ENCODE measurements at regions of chr19 and their contacts with region 1.

Region 1: GRCh38 chr19:35509861-35510625 is 3.4 kb downstream of the DMKN start:
- DNase-seq: no peak
- H3K4me3 ChIP-seq: peak overlapping the region; percentile 46
- CTCF ChIP-seq: peak; percentile 93

Region 2: GRCh38 chr19:35360880-35361420 is 149.1 kb before region 1 on chr19:
- CTCF ChIA-PET with region 1: no interaction called
- POLR2A ChIA-PET with region 1: no interaction called
- DNase-seq: no peak
- H3K4me3 ChIP-seq: no peak overlapping the region
- CTCF ChIP-seq: no peak

Region 3: GRCh38 chr19:35449053-35449687 is 60.9 kb before region 1 on chr19:
- CTCF ChIA-PET with region 1: no interaction called
- POLR2A ChIA-PET with region 1: no interaction called
- DNase-seq: no peak
- H3K4me3 ChIP-seq: no peak overlapping the region
- CTCF ChIP-seq: no peak

Region 4: DNA sequence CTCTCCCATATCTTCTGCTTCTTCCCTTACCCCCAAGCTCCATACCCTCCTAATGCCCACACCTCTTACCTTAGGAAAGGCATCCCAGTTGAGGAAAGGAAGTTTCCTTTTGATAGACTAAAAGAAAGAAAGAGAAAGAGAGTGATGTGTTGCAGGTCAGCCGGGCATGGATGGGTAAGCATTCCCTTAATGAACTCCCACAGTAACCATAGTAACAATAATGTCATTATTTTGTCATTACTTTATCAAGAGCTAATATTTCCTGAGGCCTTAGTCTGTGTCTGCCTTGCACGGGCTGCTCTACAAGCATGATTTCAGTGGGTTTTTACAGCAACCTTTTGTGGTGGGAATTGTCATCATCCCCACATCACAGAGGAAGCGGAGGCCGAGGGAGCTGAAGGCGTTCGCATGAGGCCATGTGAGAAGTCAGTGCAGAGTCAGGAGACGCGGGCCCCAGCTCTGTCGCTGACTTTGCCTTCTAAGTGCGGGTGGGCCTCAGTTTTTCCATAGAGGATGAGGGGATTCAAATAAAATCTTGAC is 22.3 kb before region 1 on chr19:
- CTCF ChIA-PET with region 1: interaction called, 11 read pairs
- POLR2A ChIA-PET with region 1: no interaction called
- DNase-seq: no peak
- H3K4me3 ChIP-seq: no peak overlapping the region
- CTCF ChIP-seq: no peak

Region 5: GRCh38 chr19:35495107-35496064 is 14.7 kb before region 1 on chr19:
- CTCF ChIA-PET with region 1: interaction called, 106 read pairs
- POLR2A ChIA-PET with region 1: no interaction called
- DNase-seq: no peak
- H3K4me3 ChIP-seq: no peak overlapping the region
- CTCF ChIP-seq: peak; percentile 99

Measured in AG04449 (cell line).